CD8-positive, alpha-beta T cell (primary cell): ENCODE measurements at regions of chr19 and their contacts with region 1.

Region 1: DNA sequence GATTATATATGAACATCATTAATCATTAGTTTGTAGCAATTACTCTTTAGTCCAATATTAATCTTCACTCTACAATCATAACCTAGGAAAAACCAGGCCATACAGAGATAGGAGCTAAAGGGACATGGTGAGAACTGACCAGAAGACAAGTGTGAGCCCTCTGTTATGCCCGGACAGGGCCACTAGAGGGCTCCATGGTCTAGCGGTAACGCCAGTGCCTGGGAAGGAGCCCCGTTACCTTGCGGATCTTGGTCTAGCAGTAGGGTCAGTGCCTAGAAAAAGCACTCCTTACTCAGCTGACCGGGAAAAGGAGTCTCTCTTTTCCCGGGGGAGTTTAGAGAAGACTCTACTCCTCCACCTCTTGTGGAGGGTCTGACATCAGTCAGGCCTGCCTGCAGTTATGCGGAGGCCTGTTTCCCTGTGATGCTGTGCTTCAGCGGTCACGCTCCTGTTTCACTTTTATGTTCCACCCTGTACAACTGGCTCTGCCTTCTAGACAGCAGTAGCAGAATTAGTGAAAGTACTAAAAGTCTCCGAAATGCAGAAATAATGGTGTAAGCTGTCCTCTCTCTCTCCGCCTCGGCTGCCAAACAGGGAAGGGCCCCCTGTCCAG is 13.8 kb downstream of the OR7D4 start:
- DNase-seq: peak; percentile 32 to 79 (median 65)
- ATAC-seq: peak; percentile 71
- H3K4me3 ChIP-seq: peak overlapping the region in 1 of 2 experiments; percentile 32
- H3K4me3 Mint-ChIP-seq: peak overlapping the region; percentile 60
- H3K27ac ChIP-seq: no peak overlapping the region
- H3K27ac Mint-ChIP-seq: no peak overlapping the region
- H3K4me1 ChIP-seq: no peaks in the 10 kb centered on the region
- H3K4me1 Mint-ChIP-seq: peaks cover 6% of the 10 kb centered on the region
- H3K27me3 ChIP-seq: no peaks in the 10 kb centered on the region
- H3K27me3 Mint-ChIP-seq: peaks cover 8% of the 10 kb centered on the region
- CTCF ChIP-seq: peak; percentile 98

Region 2: GRCh38 chr19:9219489-9219888 is 13.9 kb after region 1 on chr19 and contains the start of gene OR7D4:
- CTCF ChIA-PET with region 1: interaction called, 11 read pairs
- POLR2A ChIA-PET with region 1: no interaction called
- intact Hi-C with region 1: no loop called
- DNase-seq: no peak
- ATAC-seq: no peak
- H3K4me3 ChIP-seq: no peak within 1 kb of the TSS
- H3K4me3 Mint-ChIP-seq: no peak within 1 kb of the TSS
- H3K27ac ChIP-seq: no peak within 1 kb of the TSS
- H3K27ac Mint-ChIP-seq: no peak within 1 kb of the TSS
- H3K4me1 ChIP-seq: no peaks in the 10 kb centered on the region
- H3K4me1 Mint-ChIP-seq: no peaks in the 10 kb centered on the region
- H3K27me3 ChIP-seq: no peaks in the 10 kb centered on the region
- H3K27me3 Mint-ChIP-seq: peaks cover 16% of the 10 kb centered on the region
- CTCF ChIP-seq: no peak
- total RNA-seq, gene OR7D4: not detected

Region 3: DNA sequence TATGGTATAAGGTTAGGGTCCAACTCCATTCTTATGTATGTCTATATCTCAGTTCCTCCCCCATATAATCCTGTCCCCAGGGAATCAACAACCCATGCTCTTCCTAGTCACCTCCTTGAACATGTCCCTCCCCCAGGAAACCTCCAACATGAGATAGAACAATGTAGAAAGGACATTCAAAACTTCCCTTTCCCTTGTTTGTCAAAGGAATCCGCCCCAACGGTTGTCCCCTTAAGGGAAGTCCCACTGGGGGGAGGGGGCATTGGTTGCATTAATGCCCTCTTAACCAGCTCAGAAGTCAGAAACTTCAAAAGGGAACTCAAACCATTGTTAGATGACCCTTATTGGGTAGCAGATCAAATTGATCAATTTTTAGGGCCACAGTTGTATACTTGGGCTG is 422.2 kb after region 1 on chr19:
- CTCF ChIA-PET with region 1: interaction called, 7 read pairs
- POLR2A ChIA-PET with region 1: no interaction called
- intact Hi-C with region 1: loop called in 1 of 2 experiments (anchors 5 kb)
- DNase-seq: no peak
- ATAC-seq: no peak
- H3K4me3 ChIP-seq: no peak overlapping the region
- H3K4me3 Mint-ChIP-seq: no peak overlapping the region
- H3K27ac ChIP-seq: no peak overlapping the region
- H3K27ac Mint-ChIP-seq: no peak overlapping the region
- H3K4me1 ChIP-seq: no peaks in the 10 kb centered on the region
- H3K4me1 Mint-ChIP-seq: peaks cover 5% of the 10 kb centered on the region
- H3K27me3 ChIP-seq: no peaks in the 10 kb centered on the region
- H3K27me3 Mint-ChIP-seq: no peaks in the 10 kb centered on the region
- CTCF ChIP-seq: no peak